ENCODE measurements at regions of chr4 and their contacts with region 1.

Region 1: DNA sequence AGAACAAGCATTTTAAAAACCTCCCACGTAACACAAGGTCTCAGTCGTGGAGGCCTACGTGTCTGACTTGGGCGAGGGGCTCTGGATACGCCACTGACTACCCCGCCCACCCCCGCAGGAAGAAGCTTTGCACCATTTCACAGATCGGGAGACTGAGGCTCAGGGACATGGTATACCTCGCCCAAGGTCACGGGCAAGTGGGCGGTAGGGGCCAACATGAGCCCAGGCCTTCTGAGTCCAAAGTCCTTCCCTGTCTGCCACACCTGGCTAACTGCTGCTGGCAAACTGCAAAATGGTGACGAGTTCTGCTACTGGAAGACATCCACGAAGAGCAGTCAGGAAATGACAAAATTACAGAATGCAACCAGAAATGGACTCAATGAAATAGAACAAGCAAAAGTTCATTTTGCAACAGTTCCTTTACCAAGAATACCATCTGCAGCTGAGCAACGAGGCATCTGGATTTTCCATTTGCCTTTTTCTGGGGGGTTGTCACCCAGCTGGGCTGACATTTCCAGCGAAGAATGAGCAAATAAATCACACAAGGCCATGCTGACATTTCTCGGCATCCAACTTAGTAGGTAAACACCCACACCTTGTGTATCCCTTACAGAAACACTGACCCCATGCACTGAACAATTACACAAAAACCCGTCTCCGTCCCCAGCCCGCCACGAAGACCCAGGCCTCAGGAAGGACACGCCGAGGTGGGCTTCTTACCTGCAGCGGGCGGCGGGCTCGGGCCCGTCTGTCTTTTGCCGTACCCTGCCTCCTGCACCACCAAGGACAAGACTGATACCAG is 70.2 kb upstream of the AFAP1 start:
- DNase-seq: no peak
- H3K4me3 ChIP-seq: no peak overlapping the region
- H3K27ac ChIP-seq: no peak overlapping the region
- H3K4me1 ChIP-seq: no peaks in the 10 kb centered on the region
- H3K27me3 ChIP-seq: no peaks in the 10 kb centered on the region
- CTCF ChIP-seq: no peak

Region 2: GRCh38 chr4:7227008-7227407 is 782.9 kb before region 1 on chr4:
- CTCF ChIA-PET with region 1: no interaction called
- dilution Hi-C with region 1: loop called (anchors 5 kb)
- in situ Hi-C with region 1: no loop called
- intact Hi-C with region 1: no loop called
- DNase-seq: no peak
- H3K4me3 ChIP-seq: no peak overlapping the region
- H3K27ac ChIP-seq: no peak overlapping the region
- H3K4me1 ChIP-seq: no peaks in the 10 kb centered on the region
- H3K27me3 ChIP-seq: no peaks in the 10 kb centered on the region
- CTCF ChIP-seq: no peak

Region 3: GRCh38 chr4:7668271-7668670 is 341.6 kb before region 1 on chr4:
- CTCF ChIA-PET with region 1: no interaction called
- dilution Hi-C with region 1: loop called (anchors 5 kb)
- in situ Hi-C with region 1: no loop called
- intact Hi-C with region 1: no loop called
- DNase-seq: no peak
- H3K4me3 ChIP-seq: no peak overlapping the region
- H3K27ac ChIP-seq: no peak overlapping the region
- H3K4me1 ChIP-seq: peaks cover 9% of the 10 kb centered on the region
- H3K27me3 ChIP-seq: no peaks in the 10 kb centered on the region
- CTCF ChIP-seq: no peak

Region 4: DNA sequence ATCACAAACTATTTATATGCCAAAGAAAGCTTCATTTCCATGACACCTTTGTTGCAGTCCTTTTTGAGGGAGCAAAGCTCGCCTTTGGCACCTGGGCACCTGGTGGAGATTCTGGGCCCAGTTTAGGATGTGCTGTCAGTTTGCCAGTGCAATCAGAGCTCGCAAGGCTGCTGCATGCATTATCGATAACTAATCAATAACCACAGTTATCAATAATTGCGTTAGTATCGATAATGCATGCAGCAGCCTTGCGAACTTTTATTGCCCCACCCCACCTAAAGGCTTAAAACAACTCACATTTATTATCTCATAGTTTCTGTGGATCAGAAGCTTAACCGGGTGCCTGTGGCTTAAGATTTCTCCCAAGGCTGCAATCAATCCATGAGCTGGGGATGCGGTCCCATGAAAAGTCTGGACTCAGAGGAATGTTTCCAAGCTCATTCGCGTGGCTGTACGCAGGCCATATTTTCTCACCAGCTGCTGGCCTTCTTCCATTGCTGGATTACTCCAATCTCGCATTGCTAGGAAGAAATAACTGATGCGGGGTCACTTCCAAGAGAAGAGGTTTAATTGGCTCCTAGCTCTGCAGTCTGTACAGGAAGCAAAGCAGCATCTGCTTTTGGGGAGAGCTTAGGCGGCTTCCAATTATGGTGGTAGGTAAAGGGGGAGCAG is 64.1 kb before region 1 on chr4:
- CTCF ChIA-PET with region 1: no interaction called
- dilution Hi-C with region 1: loop called (anchors 5 kb)
- in situ Hi-C with region 1: no loop called
- intact Hi-C with region 1: no loop called
- DNase-seq: no peak
- H3K4me3 ChIP-seq: no peak overlapping the region
- H3K27ac ChIP-seq: no peak overlapping the region
- H3K4me1 ChIP-seq: peaks cover 6% of the 10 kb centered on the region
- H3K27me3 ChIP-seq: no peaks in the 10 kb centered on the region
- CTCF ChIP-seq: no peak

Region 5: GRCh38 chr4:7998447-7998846 is 11.5 kb before region 1 on chr4:
- CTCF ChIA-PET with region 1: no interaction called
- dilution Hi-C with region 1: no loop called
- in situ Hi-C with region 1: no loop called
- intact Hi-C with region 1: no loop called
- DNase-seq: no peak
- H3K4me3 ChIP-seq: no peak overlapping the region
- H3K27ac ChIP-seq: no peak overlapping the region
- H3K4me1 ChIP-seq: no peaks in the 10 kb centered on the region
- H3K27me3 ChIP-seq: no peaks in the 10 kb centered on the region
- CTCF ChIP-seq: no peak

Region 6: DNA sequence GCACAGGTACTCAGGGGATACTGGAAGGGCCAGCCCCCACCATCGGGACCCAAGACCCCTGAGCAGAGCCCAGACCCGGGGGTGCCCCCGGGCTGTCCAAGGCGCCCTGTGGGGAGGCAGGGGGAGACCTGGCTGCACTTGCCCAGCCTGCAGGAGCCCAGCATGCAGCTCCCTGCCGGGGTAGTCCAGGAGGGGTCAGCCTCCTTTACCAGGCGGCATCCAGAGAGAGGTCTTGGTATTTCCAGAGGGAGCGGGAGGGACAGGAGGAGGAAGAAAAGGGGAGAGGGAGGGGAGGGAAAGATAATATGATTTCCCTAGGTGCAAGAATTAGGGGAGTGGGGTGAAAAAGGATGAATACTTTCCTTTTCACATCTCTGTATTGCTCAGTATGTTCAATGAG is 51.2 kb after region 1 on chr4:
- CTCF ChIA-PET with region 1: no interaction called
- dilution Hi-C with region 1: loop called (anchors 5 kb)
- in situ Hi-C with region 1: no loop called
- intact Hi-C with region 1: no loop called
- DNase-seq: no peak
- H3K4me3 ChIP-seq: no peak overlapping the region
- H3K27ac ChIP-seq: no peak overlapping the region
- H3K4me1 ChIP-seq: no peaks in the 10 kb centered on the region
- H3K27me3 ChIP-seq: no peaks in the 10 kb centered on the region
- CTCF ChIP-seq: no peak

Measured in mammary epithelial cell (primary cell).